ENCODE measurements at regions of chr3 and their contacts with region 1.

Region 1: DNA sequence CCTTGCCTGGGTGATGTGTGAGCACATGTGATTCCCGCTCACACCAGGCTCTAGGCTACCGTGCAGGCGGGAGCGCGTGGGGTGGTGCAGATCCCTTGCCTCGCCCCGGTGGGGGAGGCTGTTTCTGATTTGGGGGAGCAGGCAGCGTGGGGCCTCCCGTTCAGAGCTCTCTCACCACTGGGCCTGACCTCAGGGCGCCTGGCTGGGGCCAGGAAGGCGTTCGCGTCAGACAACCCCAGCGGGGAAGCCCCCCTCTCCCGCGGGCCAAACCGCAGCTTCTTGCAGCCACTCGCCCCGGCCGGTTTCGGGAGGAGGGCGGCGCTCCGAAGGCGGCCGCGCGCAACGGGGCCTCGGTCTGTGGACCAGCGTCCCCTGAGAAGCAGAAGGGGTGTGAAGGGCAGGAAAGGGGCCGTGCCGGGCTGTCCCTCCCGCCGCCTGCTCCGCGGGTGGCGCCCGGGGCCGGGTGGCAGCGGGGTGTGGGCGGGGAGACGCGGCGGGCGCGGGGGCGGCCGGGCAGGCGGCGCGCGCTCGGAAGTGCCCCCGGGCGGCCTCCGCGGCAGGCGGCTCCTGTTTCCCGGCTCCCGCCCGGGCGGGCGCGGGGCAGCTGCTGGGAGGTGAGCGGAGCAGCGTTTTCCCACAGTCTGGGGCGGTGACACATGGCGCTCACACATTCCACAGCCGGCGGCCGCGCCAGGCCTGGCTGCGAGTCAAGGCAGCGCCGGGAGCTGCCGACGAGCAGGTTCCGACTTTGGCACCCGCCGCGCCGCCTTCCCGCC is 65.1 kb upstream of the HES1 start:
- DNase-seq: peak; percentile 96
- ATAC-seq: peak; percentile 94
- H3K4me3 ChIP-seq: peak overlapping the region; percentile 30 to 64 (median 52)
- H3K4me3 Mint-ChIP-seq: peak overlapping the region; percentile 85
- H3K27ac ChIP-seq: peak overlapping the region in 1 of 2 donors; percentile 59
- H3K27ac Mint-ChIP-seq: peak overlapping the region; percentile 87
- H3K4me1 ChIP-seq: peaks cover 15 to 22% of the 10 kb centered on the region in 2 donors
- H3K4me1 Mint-ChIP-seq: peaks cover 34% of the 10 kb centered on the region
- H3K27me3 ChIP-seq: no peaks in the 10 kb centered on the region
- H3K27me3 Mint-ChIP-seq: no peaks in the 10 kb centered on the region
- CTCF ChIP-seq: no peak

Region 2: GRCh38 chr3:194003125-194004057 is 67.4 kb before region 1 on chr3:
- CTCF ChIA-PET with region 1: no interaction called
- POLR2A ChIA-PET with region 1: no interaction called
- intact Hi-C with region 1: loop called (anchors 1 kb)
- DNase-seq: peak; percentile 69
- ATAC-seq: peak; percentile 93
- H3K4me3 ChIP-seq: peak overlapping the region in 4 of 5 experiments; percentile 31 to 76 (median 56)
- H3K4me3 Mint-ChIP-seq: peak overlapping the region; percentile 85
- H3K27ac ChIP-seq: peak overlapping the region in 1 of 2 donors; percentile 22
- H3K27ac Mint-ChIP-seq: peak overlapping the region; percentile 61
- H3K4me1 ChIP-seq: peaks cover 32 to 38% of the 10 kb centered on the region in 2 donors
- H3K4me1 Mint-ChIP-seq: peaks cover 33% of the 10 kb centered on the region
- H3K27me3 ChIP-seq: peaks cover 0 to 18% (median 0%) of the 10 kb centered on the region in 4 experiments
- H3K27me3 Mint-ChIP-seq: peaks cover 13% of the 10 kb centered on the region
- CTCF ChIP-seq: no peak

Region 3: GRCh38 chr3:194084284-194084683 is 13.5 kb after region 1 on chr3:
- CTCF ChIA-PET with region 1: interaction called, 3 read pairs
- POLR2A ChIA-PET with region 1: no interaction called
- intact Hi-C with region 1: loop called (anchors 2 kb)
- DNase-seq: peak; percentile 55
- ATAC-seq: peak; percentile 47
- H3K4me3 ChIP-seq: no peak overlapping the region
- H3K4me3 Mint-ChIP-seq: no peak overlapping the region
- H3K27ac ChIP-seq: no peak overlapping the region
- H3K27ac Mint-ChIP-seq: no peak overlapping the region
- H3K4me1 ChIP-seq: peaks cover 14 to 19% of the 10 kb centered on the region in 2 donors
- H3K4me1 Mint-ChIP-seq: peaks cover 26% of the 10 kb centered on the region
- H3K27me3 ChIP-seq: peaks cover 0 to 2% (median 0%) of the 10 kb centered on the region in 4 experiments
- H3K27me3 Mint-ChIP-seq: peaks cover 8% of the 10 kb centered on the region
- CTCF ChIP-seq: no peak

Region 4: DNA sequence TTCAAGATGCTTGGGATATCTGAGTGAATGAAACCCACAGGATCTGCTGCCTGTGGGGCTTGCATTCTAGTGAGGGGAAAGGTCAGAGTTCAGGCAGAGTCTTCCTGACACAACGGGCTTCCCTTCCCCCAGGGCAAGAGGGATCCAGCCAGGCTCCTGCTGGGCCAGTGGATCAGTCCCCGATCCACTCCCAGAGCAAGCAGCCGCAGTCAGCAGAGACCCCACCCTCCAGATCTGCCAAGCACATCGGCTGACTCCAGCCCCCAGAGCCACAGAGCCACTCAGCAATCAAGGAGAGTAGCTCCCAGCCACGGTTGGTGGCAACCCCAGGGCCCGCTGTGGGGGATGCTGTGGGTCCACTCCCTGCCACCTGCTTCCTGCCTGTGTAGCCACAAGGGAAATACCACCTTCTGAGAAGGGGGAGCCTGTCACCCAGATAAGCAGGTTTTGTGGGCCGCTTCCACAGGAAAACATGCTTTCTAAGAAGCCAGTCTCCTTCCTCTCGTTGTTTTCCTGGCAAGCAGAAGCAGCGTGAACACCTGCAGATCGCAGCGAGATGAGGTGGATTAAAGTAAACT is 235.4 kb after region 1 on chr3:
- CTCF ChIA-PET with region 1: no interaction called
- POLR2A ChIA-PET with region 1: no interaction called
- intact Hi-C with region 1: loop called (anchors 1 kb)
- DNase-seq: peak; percentile 89
- ATAC-seq: peak; percentile 63
- H3K4me3 ChIP-seq: peak overlapping the region in 3 of 5 experiments; percentile 7 to 57 (median 27)
- H3K4me3 Mint-ChIP-seq: peak overlapping the region; percentile 71
- H3K27ac ChIP-seq: peak overlapping the region; percentile 95 to 98
- H3K27ac Mint-ChIP-seq: peak overlapping the region; percentile 91
- H3K4me1 ChIP-seq: peaks cover 50 to 61% of the 10 kb centered on the region in 2 donors
- H3K4me1 Mint-ChIP-seq: peaks cover 51% of the 10 kb centered on the region
- H3K27me3 ChIP-seq: peaks cover 0 to 5% (median 2%) of the 10 kb centered on the region in 4 experiments
- H3K27me3 Mint-ChIP-seq: peaks cover 5% of the 10 kb centered on the region
- CTCF ChIP-seq: no peak

Measured in B cell (primary cell).